ENCODE measurements at regions of chr1 and their contacts with region 1.

Region 1: GRCh38 chr1:97820470-97821188 is 100.2 kb downstream of the DPYD start:
- DNase-seq: no peak
- H3K4me3 Mint-ChIP-seq: no peak overlapping the region
- H3K27ac Mint-ChIP-seq: no peak overlapping the region
- H3K4me1 Mint-ChIP-seq: no peaks in the 10 kb centered on the region
- H3K27me3 Mint-ChIP-seq: no peaks in the 10 kb centered on the region

Region 2: GRCh38 chr1:96966536-96967138 is 854.0 kb before region 1 on chr1:
- intact Hi-C with region 1: loop called (anchors 1 kb)
- DNase-seq: peak; percentile 43
- H3K4me3 Mint-ChIP-seq: no peak overlapping the region
- H3K27ac Mint-ChIP-seq: no peak overlapping the region
- H3K4me1 Mint-ChIP-seq: no peaks in the 10 kb centered on the region
- H3K27me3 Mint-ChIP-seq: peaks cover 7% of the 10 kb centered on the region

Region 3: GRCh38 chr1:97137862-97138514 is 682.6 kb before region 1 on chr1:
- intact Hi-C with region 1: loop called (anchors 1 kb)
- DNase-seq: no peak
- H3K4me3 Mint-ChIP-seq: no peak overlapping the region
- H3K27ac Mint-ChIP-seq: no peak overlapping the region
- H3K4me1 Mint-ChIP-seq: peaks cover 5% of the 10 kb centered on the region
- H3K27me3 Mint-ChIP-seq: no peaks in the 10 kb centered on the region

Region 4: GRCh38 chr1:97186404-97186803 is 634.2 kb before region 1 on chr1:
- intact Hi-C with region 1: loop called (anchors 2 kb)
- DNase-seq: no peak
- H3K4me3 Mint-ChIP-seq: no peak overlapping the region
- H3K27ac Mint-ChIP-seq: no peak overlapping the region
- H3K4me1 Mint-ChIP-seq: no peaks in the 10 kb centered on the region
- H3K27me3 Mint-ChIP-seq: no peaks in the 10 kb centered on the region

Region 5: GRCh38 chr1:97243973-97244560 is 576.6 kb before region 1 on chr1:
- intact Hi-C with region 1: loop called (anchors 1 kb)
- DNase-seq: no peak
- H3K4me3 Mint-ChIP-seq: no peak overlapping the region
- H3K27ac Mint-ChIP-seq: no peak overlapping the region
- H3K4me1 Mint-ChIP-seq: no peaks in the 10 kb centered on the region
- H3K27me3 Mint-ChIP-seq: no peaks in the 10 kb centered on the region

Region 6: DNA sequence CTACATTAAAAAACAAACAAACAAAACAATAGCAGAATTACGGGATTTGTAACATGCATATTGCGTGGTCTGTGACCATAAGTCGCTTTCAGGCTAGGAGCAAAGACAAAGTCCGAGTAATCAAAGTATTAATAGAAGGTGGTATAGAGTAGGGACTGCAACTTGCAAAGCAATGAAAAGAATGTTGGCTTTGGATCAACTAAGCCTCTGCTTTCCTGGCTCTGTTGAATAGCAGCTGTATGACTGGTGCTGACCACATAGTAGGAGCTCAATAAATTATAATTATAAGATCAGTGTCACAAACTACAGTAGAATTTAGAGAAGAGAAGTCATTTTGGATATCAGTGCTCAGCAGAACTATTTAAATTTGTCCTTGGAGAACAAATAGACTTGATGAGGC is 486.2 kb before region 1 on chr1:
- intact Hi-C with region 1: no loop called
- DNase-seq: no peak
- H3K4me3 Mint-ChIP-seq: no peak overlapping the region
- H3K27ac Mint-ChIP-seq: no peak overlapping the region
- H3K4me1 Mint-ChIP-seq: no peaks in the 10 kb centered on the region
- H3K27me3 Mint-ChIP-seq: peaks cover 2% of the 10 kb centered on the region

Region 7: DNA sequence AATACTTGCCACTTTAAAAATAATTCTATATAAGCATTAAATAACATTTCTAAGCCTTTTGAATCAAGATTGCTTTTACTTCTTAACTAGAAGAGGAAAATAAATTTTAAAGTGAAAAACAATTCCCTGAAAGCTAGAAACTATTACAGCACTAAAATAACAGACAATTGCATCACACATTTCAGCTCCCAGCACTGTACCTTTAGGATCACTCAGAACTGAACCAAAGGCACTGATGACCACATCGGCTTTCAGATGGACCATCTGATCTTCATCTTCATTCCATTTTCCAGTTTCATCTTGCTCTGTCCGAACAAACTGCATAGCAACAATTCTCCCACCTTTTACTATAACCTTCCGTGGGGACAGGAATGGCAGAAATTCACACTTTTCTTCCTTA is 247.1 kb before region 1 on chr1:
- intact Hi-C with region 1: no loop called
- DNase-seq: no peak
- H3K4me3 Mint-ChIP-seq: no peak overlapping the region
- H3K27ac Mint-ChIP-seq: no peak overlapping the region
- H3K4me1 Mint-ChIP-seq: no peaks in the 10 kb centered on the region
- H3K27me3 Mint-ChIP-seq: no peaks in the 10 kb centered on the region

Region 8: GRCh38 chr1:97621955-97622354 is 198.7 kb before region 1 on chr1:
- intact Hi-C with region 1: no loop called
- DNase-seq: no peak
- H3K4me3 Mint-ChIP-seq: no peak overlapping the region
- H3K27ac Mint-ChIP-seq: no peak overlapping the region
- H3K4me1 Mint-ChIP-seq: no peaks in the 10 kb centered on the region
- H3K27me3 Mint-ChIP-seq: no peaks in the 10 kb centered on the region

Region 9: DNA sequence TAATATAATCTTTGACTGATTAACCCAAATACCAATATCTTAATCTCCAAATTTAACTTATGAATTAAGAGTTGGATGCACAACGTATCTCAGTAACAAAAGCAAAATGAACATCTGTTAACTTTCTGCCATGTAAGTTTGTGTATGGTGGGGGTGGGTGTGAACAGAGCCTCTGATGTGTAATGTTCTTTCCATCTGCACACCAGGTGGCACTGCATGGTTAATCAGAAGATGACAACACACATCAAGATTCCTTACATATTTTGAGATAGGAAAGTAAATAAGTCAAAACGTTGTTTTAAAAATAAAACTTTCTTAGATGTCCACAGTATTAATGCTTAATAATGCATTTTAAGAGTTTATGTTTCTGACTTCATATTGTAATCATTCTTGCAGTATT is 151.7 kb before region 1 on chr1:
- intact Hi-C with region 1: loop called (anchors 1 kb)
- DNase-seq: no peak
- H3K4me3 Mint-ChIP-seq: no peak overlapping the region
- H3K27ac Mint-ChIP-seq: no peak overlapping the region
- H3K4me1 Mint-ChIP-seq: no peaks in the 10 kb centered on the region
- H3K27me3 Mint-ChIP-seq: no peaks in the 10 kb centered on the region

Region 10: DNA sequence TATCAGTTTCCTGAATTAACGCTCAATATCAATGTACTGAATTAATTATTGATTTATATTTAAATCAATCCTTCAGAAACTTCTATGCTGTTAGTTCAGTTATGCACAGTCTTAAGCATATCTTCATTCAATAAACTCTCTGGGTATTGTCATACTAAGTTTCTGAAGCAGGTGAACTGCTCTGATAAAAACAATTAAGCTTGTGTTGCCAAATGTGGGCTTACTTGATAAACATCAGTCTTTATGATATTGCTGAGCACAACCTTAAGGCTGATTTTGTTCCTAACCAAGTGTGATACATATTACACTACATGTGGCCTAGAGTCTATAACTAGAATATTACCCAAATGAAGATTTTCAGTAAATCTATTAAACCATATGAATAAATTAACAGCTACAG is 32.6 kb after region 1 on chr1:
- intact Hi-C with region 1: no loop called
- DNase-seq: no peak
- H3K4me3 Mint-ChIP-seq: no peak overlapping the region
- H3K27ac Mint-ChIP-seq: no peak overlapping the region
- H3K4me1 Mint-ChIP-seq: peaks cover 11% of the 10 kb centered on the region
- H3K27me3 Mint-ChIP-seq: no peaks in the 10 kb centered on the region

Measured in activated T-helper 1 cell treated with anti-CD3 and anti-CD28 coated beads, Interleukin-12 subunit alpha, Interleukin-12 subunit beta, Interleukin-2, Interleukin-4 antibody, amounts not matched to agents 30 ng/mL and 10 ng/mL and 1 ng/mL, durations not matched to agents 14 hours and 24 hours and 36 hours (primary cell).